Endothelial cell of umbilical vein (primary cell): ENCODE measurements at regions of chr3 and their contacts with region 1.

Region 1: GRCh38 chr3:179288845-179289244 is 34.0 kb upstream of the ZNF639 start:
- DNase-seq: no peak
- H3K4me3 ChIP-seq: no peak overlapping the region
- H3K27ac ChIP-seq: no peak overlapping the region
- H3K4me1 ChIP-seq: no peaks in the 10 kb centered on the region
- H3K27me3 ChIP-seq: no peaks in the 10 kb centered on the region
- CTCF ChIP-seq: no peak
- POLR2A ChIP-seq: no peak

Region 2: GRCh38 chr3:179233043-179233442 is 55.8 kb before region 1 on chr3:
- CTCF ChIA-PET with region 1: no interaction called
- POLR2A ChIA-PET with region 1: no interaction called
- dilution Hi-C with region 1: no loop called
- intact Hi-C with region 1: loop called (anchors 2 kb)
- DNase-seq: no peak
- H3K4me3 ChIP-seq: no peak overlapping the region
- H3K27ac ChIP-seq: no peak overlapping the region
- H3K4me1 ChIP-seq: no peaks in the 10 kb centered on the region
- H3K27me3 ChIP-seq: no peaks in the 10 kb centered on the region
- CTCF ChIP-seq: no peak
- POLR2A ChIP-seq: no peak

Region 3: DNA sequence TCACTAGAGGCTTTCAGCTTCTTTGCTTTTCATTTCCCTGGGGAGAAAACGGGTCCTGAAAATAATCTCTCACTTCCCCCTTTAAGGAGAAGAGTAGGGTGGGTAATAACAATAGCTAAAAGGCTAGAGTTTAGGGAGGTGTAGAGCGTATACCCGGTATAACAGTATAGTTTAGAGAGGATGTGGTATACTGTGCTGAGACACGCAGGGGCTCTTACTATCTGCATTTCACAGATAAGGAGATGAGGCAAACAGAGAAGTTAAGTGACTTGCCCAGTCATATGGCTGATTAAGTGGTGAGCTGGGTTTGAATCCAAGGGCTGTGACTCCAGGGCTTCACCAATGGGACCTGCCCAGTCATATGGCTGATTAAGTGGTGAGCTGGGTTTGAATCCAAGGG is 23.0 kb before region 1 on chr3:
- CTCF ChIA-PET with region 1: no interaction called
- POLR2A ChIA-PET with region 1: no interaction called
- dilution Hi-C with region 1: no loop called
- intact Hi-C with region 1: no loop called
- DNase-seq: no peak
- H3K4me3 ChIP-seq: no peak overlapping the region
- H3K27ac ChIP-seq: no peak overlapping the region
- H3K4me1 ChIP-seq: peaks cover 22% of the 10 kb centered on the region
- H3K27me3 ChIP-seq: no peaks in the 10 kb centered on the region
- CTCF ChIP-seq: no peak
- POLR2A ChIP-seq: no peak